ENCODE measurements at regions of chr15 and their contacts with region 1.

Region 1: DNA sequence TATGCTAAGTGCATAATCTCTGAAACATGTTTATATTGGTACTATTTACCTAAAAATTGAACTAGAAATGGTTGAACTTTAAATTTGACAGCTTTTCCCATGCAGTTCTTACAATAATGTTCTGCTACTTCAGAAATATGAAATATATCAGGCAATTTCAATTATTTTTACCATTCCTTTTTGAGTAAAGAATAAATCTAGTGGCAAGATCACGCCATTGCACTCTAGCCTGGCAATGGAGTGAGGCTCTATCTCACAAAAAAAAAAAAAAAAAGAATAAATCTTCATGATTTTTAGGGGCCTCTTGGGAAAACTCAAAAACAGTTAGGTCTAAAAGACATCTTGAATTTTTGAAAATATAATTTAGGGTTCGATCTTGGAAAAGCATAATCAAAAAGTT is 10.6 kb upstream of the DNAAF4 start:
- DNase-seq: no peak
- ATAC-seq: no peak
- H3K4me3 ChIP-seq: no peak overlapping the region
- H3K27ac ChIP-seq: no peak overlapping the region
- H3K4me1 ChIP-seq: no peaks in the 10 kb centered on the region
- H3K27me3 ChIP-seq: no peaks in the 10 kb centered on the region
- CTCF ChIP-seq: peak; percentile 40; the same call in 1 of the 2 replicates

Region 2: DNA sequence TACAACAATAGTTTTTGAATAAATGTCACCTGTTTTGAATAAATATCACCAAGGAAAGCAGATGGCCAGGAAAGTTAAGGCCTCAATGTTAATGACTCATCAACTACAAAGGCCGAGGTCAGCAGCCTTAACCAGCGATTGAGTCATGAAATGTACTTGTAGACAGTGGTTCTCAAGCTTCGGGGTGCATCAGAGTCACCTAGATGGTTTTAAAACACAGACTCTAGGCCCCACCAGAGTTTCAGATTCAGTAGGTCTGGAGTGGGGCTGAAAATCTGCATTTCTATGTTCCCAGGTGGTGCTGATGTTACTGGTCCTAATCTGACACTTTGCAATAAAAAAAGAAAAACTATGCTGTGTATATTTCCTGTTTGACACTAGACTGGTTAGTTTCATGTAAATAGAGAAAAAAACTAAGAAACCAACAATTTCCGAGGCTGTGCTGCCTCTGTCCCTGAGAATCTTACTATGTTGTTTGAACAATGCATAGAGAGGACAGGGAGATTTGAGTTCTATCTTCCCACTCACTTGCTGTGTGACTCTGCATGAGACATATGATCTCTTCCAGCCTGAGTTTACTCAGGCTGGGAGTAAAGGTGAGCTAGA is 238.8 kb before region 1 on chr15:
- CTCF ChIA-PET with region 1: no interaction called
- POLR2A ChIA-PET with region 1: no interaction called
- in situ Hi-C with region 1: no loop called
- intact Hi-C with region 1: no loop called
- DNase-seq: no peak
- ATAC-seq: peak; percentile 53; the same call in 1 of the 2 replicates
- H3K4me3 ChIP-seq: no peak overlapping the region
- H3K27ac ChIP-seq: no peak overlapping the region
- H3K4me1 ChIP-seq: no peaks in the 10 kb centered on the region
- H3K27me3 ChIP-seq: no peaks in the 10 kb centered on the region
- CTCF ChIP-seq: no peak

Region 3: DNA sequence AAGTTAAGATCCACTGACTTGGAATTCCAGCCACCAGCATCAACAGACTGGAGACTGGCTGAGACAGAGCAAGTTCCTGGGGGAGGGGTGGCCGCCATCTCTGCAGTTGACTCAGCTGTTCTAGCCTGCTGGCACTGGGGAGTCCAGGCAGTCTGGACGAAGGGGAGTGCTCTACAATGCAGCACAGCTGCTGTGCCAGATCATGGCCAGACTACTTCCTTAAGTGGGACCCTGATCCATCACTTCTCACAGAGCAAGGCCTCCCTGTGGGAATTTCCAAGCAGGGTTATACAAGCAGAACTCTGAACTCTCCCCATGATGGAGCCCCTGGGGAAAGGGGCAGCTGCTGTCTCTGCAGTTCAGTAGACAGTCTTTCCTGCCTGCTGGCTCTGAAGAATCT is 34.3 kb after region 1 on chr15:
- CTCF ChIA-PET with region 1: no interaction called
- POLR2A ChIA-PET with region 1: no interaction called
- in situ Hi-C with region 1: no loop called
- intact Hi-C with region 1: no loop called
- DNase-seq: no peak
- ATAC-seq: no peak
- H3K4me3 ChIP-seq: no peak overlapping the region
- H3K27ac ChIP-seq: no peak overlapping the region
- H3K4me1 ChIP-seq: no peaks in the 10 kb centered on the region
- H3K27me3 ChIP-seq: no peaks in the 10 kb centered on the region
- CTCF ChIP-seq: no peak

Region 4: DNA sequence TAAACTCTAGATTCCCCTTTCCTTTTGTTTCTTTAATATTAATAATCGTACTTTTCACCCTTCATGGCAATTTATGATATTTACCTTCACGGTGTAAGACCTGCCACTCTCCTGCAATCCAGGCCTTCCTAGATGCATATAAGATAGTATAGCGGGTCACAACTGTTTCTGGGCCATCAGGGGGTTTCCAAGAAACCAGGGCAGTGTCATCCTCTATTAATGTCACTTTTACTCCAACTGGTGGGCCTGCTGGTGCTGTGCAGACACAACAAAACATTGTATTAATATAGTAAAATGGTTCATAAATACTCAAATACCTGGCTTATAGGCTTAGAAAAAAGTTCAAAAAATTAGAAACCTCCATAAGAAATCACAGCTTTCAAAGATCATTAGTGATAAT is 118.4 kb after region 1 on chr15:
- CTCF ChIA-PET with region 1: no interaction called
- POLR2A ChIA-PET with region 1: no interaction called
- in situ Hi-C with region 1: no loop called
- intact Hi-C with region 1: loop called (anchors 5 kb)
- DNase-seq: no peak
- ATAC-seq: no peak
- H3K4me3 ChIP-seq: no peak overlapping the region
- H3K27ac ChIP-seq: no peak overlapping the region
- H3K4me1 ChIP-seq: no peaks in the 10 kb centered on the region
- H3K27me3 ChIP-seq: no peaks in the 10 kb centered on the region
- CTCF ChIP-seq: no peak

Region 5: DNA sequence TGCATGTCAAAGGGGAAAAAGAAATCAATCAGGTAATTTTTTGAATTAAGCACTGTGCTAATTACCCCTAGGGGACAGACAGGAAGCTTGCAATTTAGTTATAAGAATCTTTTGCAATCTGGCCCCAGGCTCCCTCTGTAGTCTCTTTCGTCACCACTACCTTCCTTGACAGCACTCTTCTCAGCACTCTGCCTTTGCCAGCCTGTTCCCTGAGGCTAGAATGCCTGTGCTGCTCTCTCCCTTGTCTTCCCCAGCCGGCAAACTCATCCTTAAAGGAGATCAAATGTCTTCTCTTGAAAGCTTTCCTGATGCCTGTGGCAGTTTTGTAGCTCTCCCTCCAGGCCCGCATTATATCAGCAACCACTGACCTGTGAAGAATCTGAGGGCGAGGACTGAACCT is 256.7 kb after region 1 on chr15:
- CTCF ChIA-PET with region 1: no interaction called
- POLR2A ChIA-PET with region 1: no interaction called
- in situ Hi-C with region 1: no loop called
- intact Hi-C with region 1: no loop called
- DNase-seq: no peak
- ATAC-seq: no peak; the same call in 1 of the 2 replicates
- H3K4me3 ChIP-seq: no peak overlapping the region
- H3K27ac ChIP-seq: no peak overlapping the region
- H3K4me1 ChIP-seq: no peaks in the 10 kb centered on the region
- H3K27me3 ChIP-seq: no peaks in the 10 kb centered on the region; the same call in 1 of the 2 replicates
- CTCF ChIP-seq: no peak